CD4-positive, alpha-beta T cell (primary cell): ENCODE measurements at regions of chr16 and their contacts with region 1.

Region 1: GRCh38 chr16:74998481-74999218 is at the start of gene ZNRF1:
- DNase-seq: peak; percentile 64 to 89 (median 78)
- ATAC-seq: peak; percentile 79
- H3K4me3 ChIP-seq: peak within 1 kb of the TSS; percentile 61
- H3K4me3 Mint-ChIP-seq: peak within 1 kb of the TSS; percentile 94
- H3K27ac ChIP-seq: no peak within 1 kb of the TSS
- H3K27ac Mint-ChIP-seq: peak within 1 kb of the TSS; percentile 82
- H3K4me1 ChIP-seq: peaks cover 25% of the 10 kb centered on the region
- H3K4me1 Mint-ChIP-seq: peaks cover 21% of the 10 kb centered on the region
- H3K27me3 ChIP-seq: no peaks in the 10 kb centered on the region
- H3K27me3 Mint-ChIP-seq: no peaks in the 10 kb centered on the region
- CTCF ChIP-seq: peak; percentile 77
- total RNA-seq, gene ZNRF1: 2.8 to 4.0 TPM

Region 2: GRCh38 chr16:74666425-74667254 is 332.0 kb before region 1 on chr16 and contains the start of gene RFWD3:
- CTCF ChIA-PET with region 1: no interaction called
- POLR2A ChIA-PET with region 1: no interaction called
- intact Hi-C with region 1: no loop called
- DNase-seq: peak; percentile 91 to 99 (median 94)
- ATAC-seq: peak; percentile 99
- H3K4me3 ChIP-seq: peak within 1 kb of the TSS; percentile 93
- H3K4me3 Mint-ChIP-seq: peak within 1 kb of the TSS; percentile 99
- H3K27ac ChIP-seq: peak within 1 kb of the TSS; percentile 69 to 72
- H3K27ac Mint-ChIP-seq: peak within 1 kb of the TSS; percentile 95
- H3K4me1 ChIP-seq: peaks cover 38% of the 10 kb centered on the region
- H3K4me1 Mint-ChIP-seq: peaks cover 44% of the 10 kb centered on the region
- H3K27me3 ChIP-seq: no peaks in the 10 kb centered on the region
- H3K27me3 Mint-ChIP-seq: no peaks in the 10 kb centered on the region
- CTCF ChIP-seq: no peak
- total RNA-seq, gene RFWD3: 44.9 to 47.0 TPM

Region 3: GRCh38 chr16:74984535-74985296 is 13.9 kb before region 1 on chr16 and contains the start of gene WDR59:
- CTCF ChIA-PET with region 1: interaction called, 15 read pairs
- POLR2A ChIA-PET with region 1: interaction called, 8 read pairs
- intact Hi-C with region 1: loop called in 1 of 2 experiments (anchors 2 kb)
- DNase-seq: peak; percentile 94 to 100 (median 98)
- ATAC-seq: peak; percentile 98
- H3K4me3 ChIP-seq: peak within 1 kb of the TSS; percentile 100
- H3K4me3 Mint-ChIP-seq: peak within 1 kb of the TSS; percentile 96
- H3K27ac ChIP-seq: peak within 1 kb of the TSS; percentile 44 to 61
- H3K27ac Mint-ChIP-seq: peak within 1 kb of the TSS; percentile 84
- H3K4me1 ChIP-seq: peaks cover 23% of the 10 kb centered on the region
- H3K4me1 Mint-ChIP-seq: peaks cover 23% of the 10 kb centered on the region
- H3K27me3 ChIP-seq: no peaks in the 10 kb centered on the region
- H3K27me3 Mint-ChIP-seq: no peaks in the 10 kb centered on the region
- CTCF ChIP-seq: no peak
- total RNA-seq, gene WDR59: 60.2 to 67.2 TPM

Region 4: GRCh38 chr16:75011634-75012307 is 13.1 kb after region 1 on chr16:
- CTCF ChIA-PET with region 1: interaction called, 14 read pairs
- POLR2A ChIA-PET with region 1: interaction called, 4 read pairs
- intact Hi-C with region 1: no loop called
- DNase-seq: peak in 7 of 14 experiments; percentile 7 to 83 (median 16)
- ATAC-seq: peak; percentile 91
- H3K4me3 ChIP-seq: peak overlapping the region; percentile 15
- H3K4me3 Mint-ChIP-seq: peak overlapping the region; percentile 59
- H3K27ac ChIP-seq: peak overlapping the region in 1 of 2 donors; percentile 37
- H3K27ac Mint-ChIP-seq: peak overlapping the region; percentile 70
- H3K4me1 ChIP-seq: peaks cover 17% of the 10 kb centered on the region
- H3K4me1 Mint-ChIP-seq: peaks cover 25% of the 10 kb centered on the region
- H3K27me3 ChIP-seq: no peaks in the 10 kb centered on the region
- H3K27me3 Mint-ChIP-seq: no peaks in the 10 kb centered on the region
- CTCF ChIP-seq: no peak

Region 5: DNA sequence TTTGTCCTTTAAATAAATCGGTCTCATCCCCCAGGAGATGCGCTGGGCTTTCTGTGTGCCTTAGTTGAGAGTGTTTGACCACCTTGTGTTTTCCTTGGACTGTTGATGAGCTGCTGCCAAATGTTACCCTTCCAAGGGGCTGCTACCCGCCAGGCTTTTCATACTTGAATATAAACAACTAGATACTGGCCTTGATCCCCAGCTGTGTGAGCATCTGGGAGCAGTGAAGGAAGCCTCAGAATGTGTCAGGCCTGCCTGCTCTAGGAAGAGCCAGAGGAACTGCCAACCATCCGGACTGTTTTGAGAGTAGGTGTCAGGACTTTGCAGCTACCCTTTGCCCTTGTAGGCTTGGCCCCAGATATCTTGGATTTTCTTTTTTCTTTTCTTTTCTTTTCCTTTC is 60.2 kb after region 1 on chr16:
- CTCF ChIA-PET with region 1: no interaction called
- POLR2A ChIA-PET with region 1: interaction called, 4 read pairs
- intact Hi-C with region 1: loop called in 1 of 2 experiments (anchors 5 kb)
- DNase-seq: no peak
- ATAC-seq: no peak
- H3K4me3 ChIP-seq: no peak overlapping the region
- H3K4me3 Mint-ChIP-seq: no peak overlapping the region
- H3K27ac ChIP-seq: no peak overlapping the region
- H3K27ac Mint-ChIP-seq: peak overlapping the region; percentile 45
- H3K4me1 ChIP-seq: peaks cover 21% of the 10 kb centered on the region
- H3K4me1 Mint-ChIP-seq: peaks cover 54% of the 10 kb centered on the region
- H3K27me3 ChIP-seq: no peaks in the 10 kb centered on the region
- H3K27me3 Mint-ChIP-seq: no peaks in the 10 kb centered on the region
- CTCF ChIP-seq: no peak

Region 6: DNA sequence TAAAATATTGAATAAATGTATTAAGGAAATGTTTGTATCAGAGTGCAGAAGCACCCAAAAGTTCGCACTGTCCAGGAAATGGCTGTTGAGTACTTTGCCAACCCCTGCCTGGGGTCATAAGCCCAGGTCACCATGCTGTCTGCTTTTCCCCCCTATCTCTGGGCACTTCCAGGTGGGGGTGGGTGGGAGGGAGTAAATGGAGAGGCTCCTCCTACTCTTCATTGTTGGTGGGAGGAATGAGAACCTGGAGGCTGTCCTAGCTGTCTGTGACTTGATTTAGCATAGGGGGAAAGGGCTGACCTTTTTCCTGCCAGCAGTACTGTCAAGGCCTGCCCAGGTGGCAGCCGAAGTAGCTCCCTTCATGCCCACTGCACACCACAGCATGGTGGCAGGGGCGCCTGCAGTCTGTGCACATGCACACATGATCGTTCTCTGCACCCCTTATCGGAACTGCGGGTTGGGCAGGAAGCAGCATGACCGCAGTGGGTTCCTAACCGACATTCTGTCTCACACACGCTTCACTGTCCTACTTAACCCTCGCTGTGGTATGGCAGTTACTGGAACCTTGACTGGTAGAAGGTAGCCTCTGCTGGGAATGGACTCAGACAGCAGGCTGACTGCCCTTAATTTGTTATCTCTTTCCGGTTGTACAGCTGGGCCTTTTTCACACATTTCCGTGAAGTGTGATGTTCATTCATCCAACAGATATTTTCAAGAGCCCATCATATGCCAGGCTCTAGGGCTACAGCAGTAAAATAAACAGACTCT is 76.5 kb after region 1 on chr16:
- CTCF ChIA-PET with region 1: interaction called, 7 read pairs
- POLR2A ChIA-PET with region 1: no interaction called
- intact Hi-C with region 1: loop called in 1 of 2 experiments (anchors 1 kb)
- DNase-seq: peak; percentile 64 to 95 (median 80)
- ATAC-seq: peak; percentile 95
- H3K4me3 ChIP-seq: peak overlapping the region; percentile 32
- H3K4me3 Mint-ChIP-seq: peak overlapping the region; percentile 35
- H3K27ac ChIP-seq: peak overlapping the region; percentile 1 to 41
- H3K27ac Mint-ChIP-seq: peak overlapping the region; percentile 88
- H3K4me1 ChIP-seq: peaks cover 54% of the 10 kb centered on the region
- H3K4me1 Mint-ChIP-seq: peaks cover 66% of the 10 kb centered on the region
- H3K27me3 ChIP-seq: no peaks in the 10 kb centered on the region
- H3K27me3 Mint-ChIP-seq: no peaks in the 10 kb centered on the region
- CTCF ChIP-seq: no peak

Region 7: DNA sequence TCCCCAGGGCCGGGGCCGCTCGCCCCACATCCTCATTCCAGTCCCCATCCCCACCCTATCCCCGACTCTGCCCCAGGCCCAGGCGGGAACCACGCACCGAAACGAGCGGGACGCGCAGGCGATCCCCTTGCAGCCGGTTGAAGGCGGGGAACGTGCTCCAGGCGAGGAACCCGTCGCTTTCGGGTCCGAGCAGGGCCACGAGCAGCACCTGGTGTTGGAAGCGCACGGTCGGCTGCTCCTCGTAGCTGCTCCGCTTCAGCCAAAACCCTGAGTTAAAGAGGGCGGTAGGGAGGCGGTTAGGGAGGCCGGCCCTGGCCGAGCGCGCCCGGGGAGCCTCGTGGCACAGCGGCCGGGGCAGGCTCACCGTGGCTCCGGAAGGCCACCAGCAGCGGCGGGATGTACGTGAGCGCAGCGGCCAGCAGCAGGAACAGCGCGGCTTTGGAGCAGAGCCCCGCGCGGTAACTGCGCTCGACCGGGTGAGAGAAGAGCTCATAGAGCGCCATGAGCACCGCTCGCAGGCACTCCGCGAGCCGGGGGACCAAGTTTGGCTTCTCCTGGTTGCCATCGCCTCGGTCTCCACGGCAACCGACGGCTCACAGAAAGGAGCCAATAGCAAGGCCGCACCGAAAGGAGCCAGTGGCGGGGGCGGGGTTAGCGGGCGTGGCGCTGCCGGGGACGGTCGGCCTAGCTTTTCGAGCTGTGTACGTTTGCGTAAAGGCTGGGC is 557.2 kb after region 1 on chr16 and contains the start of gene TMEM231:
- CTCF ChIA-PET with region 1: no interaction called
- POLR2A ChIA-PET with region 1: no interaction called
- intact Hi-C with region 1: loop called in 1 of 2 experiments (anchors 5 kb)
- DNase-seq: peak; percentile 95 to 99 (median 97)
- ATAC-seq: peak; percentile 97
- H3K4me3 ChIP-seq: peak within 1 kb of the TSS; percentile 74
- H3K4me3 Mint-ChIP-seq: peak within 1 kb of the TSS; percentile 88
- H3K27ac ChIP-seq: peak within 1 kb of the TSS; percentile 58 to 82
- H3K27ac Mint-ChIP-seq: peak within 1 kb of the TSS; percentile 65
- H3K4me1 ChIP-seq: peaks cover 18% of the 10 kb centered on the region
- H3K4me1 Mint-ChIP-seq: peaks cover 13% of the 10 kb centered on the region
- H3K27me3 ChIP-seq: peaks cover 0 to 3% of the 10 kb centered on the region in 2 experiments
- H3K27me3 Mint-ChIP-seq: peaks cover 8% of the 10 kb centered on the region
- CTCF ChIP-seq: no peak
- total RNA-seq, gene TMEM231: 2.5 TPM